ENCODE measurements at regions of chr2 and their contacts with region 1.

Region 1: DNA sequence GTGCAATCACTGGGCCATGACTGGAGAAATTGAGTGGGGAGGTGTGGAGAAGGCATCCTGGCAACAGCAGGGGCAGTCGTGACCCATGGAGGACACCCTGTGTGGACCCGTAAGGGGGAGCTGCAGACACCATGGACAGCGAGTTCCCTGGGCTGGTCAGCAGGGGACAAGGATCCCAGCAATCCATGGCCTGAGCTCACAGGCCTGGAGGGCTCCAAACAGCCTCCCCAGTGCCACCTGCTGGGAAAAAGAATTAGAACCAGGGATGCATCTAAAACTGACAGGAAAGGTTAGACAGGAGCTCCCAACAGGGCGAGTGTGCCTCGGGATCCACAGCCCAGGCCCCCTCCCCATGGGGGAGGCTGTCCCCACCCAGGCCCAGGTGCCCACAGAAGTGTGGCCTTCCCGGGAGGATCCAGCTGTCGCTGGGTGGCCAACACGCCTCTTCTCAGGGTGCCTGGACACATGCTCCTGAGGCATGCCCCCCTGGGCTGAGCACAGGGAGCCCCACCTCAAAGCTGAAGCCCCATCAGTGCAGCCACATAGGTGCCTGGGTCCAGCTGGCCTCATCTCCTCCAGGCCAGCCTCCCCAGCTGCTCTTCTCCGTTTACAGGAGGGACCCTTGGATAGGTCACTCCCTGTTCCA is 20.5 kb upstream of the KIF1A start:
- DNase-seq: peak; percentile 68
- ATAC-seq: peak; percentile 84
- H3K4me3 Mint-ChIP-seq: no peak overlapping the region
- H3K27ac Mint-ChIP-seq: no peak overlapping the region
- H3K4me1 Mint-ChIP-seq: peaks cover 20% of the 10 kb centered on the region
- H3K27me3 Mint-ChIP-seq: peaks cover 7% of the 10 kb centered on the region
- CTCF ChIP-seq: no peak

Region 2: DNA sequence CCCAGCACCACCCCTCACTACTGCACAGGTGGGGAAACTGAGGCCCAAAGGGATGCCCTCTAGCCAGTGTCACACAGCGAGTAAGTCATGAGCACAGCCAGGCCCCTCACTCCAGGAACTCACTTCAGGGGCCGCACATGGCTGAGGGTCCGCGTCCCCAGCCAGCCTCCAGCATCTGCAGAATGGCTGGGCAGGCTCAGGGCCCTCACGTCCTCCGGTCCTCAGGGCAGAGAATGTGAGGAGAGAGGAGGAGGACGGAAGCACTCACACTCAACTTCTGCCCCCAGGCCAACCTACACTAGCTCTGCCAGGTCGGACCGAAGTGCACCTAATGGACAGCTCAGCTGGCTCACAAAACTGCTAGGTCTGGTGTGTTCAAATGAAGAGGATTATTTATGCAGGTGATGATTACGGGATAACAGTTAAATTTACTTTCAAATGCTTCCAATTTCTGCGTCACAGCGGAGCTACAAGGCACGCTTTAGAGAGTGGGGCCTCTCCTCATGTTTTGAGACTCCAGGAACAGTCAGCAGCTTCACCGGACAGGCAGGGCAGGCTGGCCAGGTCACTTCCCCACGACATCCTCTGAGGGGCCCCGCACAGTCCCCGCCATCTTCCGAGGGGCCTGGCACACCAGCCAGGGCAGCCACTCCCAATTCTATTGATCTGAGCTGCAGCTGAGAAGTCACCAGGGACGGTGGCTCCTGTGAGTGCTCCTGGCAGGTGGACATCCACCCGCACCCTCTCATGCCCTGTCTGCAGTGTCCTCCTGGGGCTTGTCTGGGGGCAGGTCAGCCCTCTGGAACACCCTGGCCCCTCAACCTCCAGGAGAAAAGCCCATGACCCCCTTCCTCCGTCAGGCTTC is 47.0 kb before region 1 on chr2:
- CTCF ChIA-PET with region 1: interaction called, 12 read pairs
- POLR2A ChIA-PET with region 1: no interaction called
- DNase-seq: no peak
- ATAC-seq: no peak
- H3K4me3 Mint-ChIP-seq: no peak overlapping the region
- H3K27ac Mint-ChIP-seq: peak overlapping the region; percentile 82
- H3K4me1 Mint-ChIP-seq: peaks cover 13% of the 10 kb centered on the region
- H3K27me3 Mint-ChIP-seq: no peaks in the 10 kb centered on the region
- CTCF ChIP-seq: no peak

Region 3: GRCh38 chr2:240810207-240810606 is 30.4 kb before region 1 on chr2:
- CTCF ChIA-PET with region 1: interaction called, 15 read pairs
- POLR2A ChIA-PET with region 1: no interaction called
- DNase-seq: no peak
- ATAC-seq: no peak
- H3K4me3 Mint-ChIP-seq: no peak overlapping the region
- H3K27ac Mint-ChIP-seq: no peak overlapping the region
- H3K4me1 Mint-ChIP-seq: peaks cover 28% of the 10 kb centered on the region
- H3K27me3 Mint-ChIP-seq: no peaks in the 10 kb centered on the region; the same call in 1 of the 2 replicates
- CTCF ChIP-seq: no peak

Region 4: GRCh38 chr2:240819858-240820606 is 20.5 kb before region 1 on chr2 and contains the start of gene KIF1A:
- CTCF ChIA-PET with region 1: interaction called, 13 read pairs
- POLR2A ChIA-PET with region 1: interaction called, 7 read pairs
- DNase-seq: peak; percentile 80
- ATAC-seq: peak; percentile 53
- H3K4me3 Mint-ChIP-seq: peak within 1 kb of the TSS; percentile 74
- H3K27ac Mint-ChIP-seq: no peak within 1 kb of the TSS
- H3K4me1 Mint-ChIP-seq: peaks cover 28% of the 10 kb centered on the region
- H3K27me3 Mint-ChIP-seq: peaks cover 39% of the 10 kb centered on the region
- CTCF ChIP-seq: no peak
- total RNA-seq, gene KIF1A: 218 to 279 TPM (median 222 TPM) in 3 replicates